Activated CD4-positive, alpha-beta T cell treated with anti-CD3 and anti-CD28 coated beads, Interleukin-2, amount 10 ng/mL, durations not matched to agents 7 days and 5 days (primary cell): ENCODE measurements at regions of chr1 and their contacts with region 1.

Region 1: GRCh38 chr1:173532237-173532636 is 55.1 kb downstream of the PRDX6 start:
- DNase-seq: no peak
- H3K4me3 Mint-ChIP-seq: no peak overlapping the region
- H3K27ac Mint-ChIP-seq: peak overlapping the region; percentile 76
- H3K4me1 Mint-ChIP-seq: peaks cover 12% of the 10 kb centered on the region
- H3K27me3 Mint-ChIP-seq: peaks cover 2% of the 10 kb centered on the region

Region 2: GRCh38 chr1:173733912-173734311 is 201.7 kb after region 1 on chr1:
- CTCF ChIA-PET with region 1: no interaction called
- POLR2A ChIA-PET with region 1: interaction called, 11 read pairs
- DNase-seq: no peak
- H3K4me3 Mint-ChIP-seq: no peak overlapping the region
- H3K27ac Mint-ChIP-seq: no peak overlapping the region
- H3K4me1 Mint-ChIP-seq: peaks cover 14% of the 10 kb centered on the region
- H3K27me3 Mint-ChIP-seq: no peaks in the 10 kb centered on the region